Right lobe of liver (tissue), 6 donors: ENCODE measurements at regions of chr18 and their contacts with region 1.

Region 1: GRCh38 chr18:24726727-24727492 is 266.5 kb downstream of the HRH4 start:
- DNase-seq: peak; percentile 57 to 60 (median 60)
- ATAC-seq: peak; percentile 68 to 87 (median 78)
- H3K4me3 ChIP-seq: no peak overlapping the region
- H3K27ac ChIP-seq: no peak overlapping the region
- H3K4me1 ChIP-seq: no peaks in the 10 kb centered on the region
- H3K27me3 ChIP-seq: peaks cover 0 to 5% of the 10 kb centered on the region in 2 donors
- CTCF ChIP-seq: peak; percentile 69 to 84 (median 80)
- POLR2A ChIP-seq: no peak

Region 2: DNA sequence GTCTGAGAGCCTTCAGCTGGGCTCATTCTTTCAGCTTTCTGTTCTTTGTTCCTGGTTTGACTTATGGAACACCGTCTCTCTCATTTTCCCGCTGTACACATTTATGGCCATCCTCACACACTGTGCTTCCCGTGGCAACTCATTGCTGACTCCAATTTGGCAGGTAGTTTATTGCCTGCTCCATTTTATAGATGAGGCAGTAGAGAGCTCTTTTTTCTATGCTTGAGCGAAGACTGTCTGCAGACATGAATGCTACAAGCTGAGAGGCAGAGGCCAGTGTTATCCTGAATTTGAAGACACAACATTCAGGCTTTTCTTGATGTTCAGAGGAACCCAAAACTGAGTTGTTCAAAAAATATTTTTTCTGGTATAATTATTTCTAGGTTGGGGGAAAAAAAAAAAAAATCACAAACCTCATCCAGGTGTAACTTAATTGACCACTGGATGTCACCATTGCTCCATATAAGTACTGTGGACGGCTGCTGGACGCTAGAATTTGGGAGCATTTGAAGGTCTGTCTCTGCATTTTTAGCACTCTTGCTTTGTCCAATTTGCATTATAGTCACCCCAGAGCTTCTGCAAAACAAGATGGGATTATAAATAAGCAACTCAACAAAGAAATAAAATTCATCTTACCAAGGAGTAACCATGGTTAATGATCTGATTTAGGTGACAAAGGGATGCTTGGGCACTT is 183.0 kb before region 1 on chr18:
- intact Hi-C with region 1: loop called (anchors 10 kb)
- DNase-seq: no peak
- ATAC-seq: peak; percentile 56 to 71 (median 64)
- H3K4me3 ChIP-seq: no peak overlapping the region
- H3K27ac ChIP-seq: no peak overlapping the region
- H3K4me1 ChIP-seq: peaks cover 0 to 5% (median 0%) of the 10 kb centered on the region in 4 donors
- H3K27me3 ChIP-seq: no peaks in the 10 kb centered on the region
- CTCF ChIP-seq: peak; percentile 38 to 61 (median 50)
- POLR2A ChIP-seq: no peak

Region 3: GRCh38 chr18:24595561-24596031 is 131.3 kb before region 1 on chr18:
- intact Hi-C with region 1: loop called in 1 of 2 experiments (anchors 10 kb)
- DNase-seq: no peak
- ATAC-seq: no peak
- H3K4me3 ChIP-seq: no peak overlapping the region
- H3K27ac ChIP-seq: no peak overlapping the region
- H3K4me1 ChIP-seq: no peaks in the 10 kb centered on the region
- H3K27me3 ChIP-seq: no peaks in the 10 kb centered on the region
- CTCF ChIP-seq: no peak
- POLR2A ChIP-seq: no peak